RWPE1 (cell line): ENCODE measurements at regions of chr1 and their contacts with region 1.

Region 1: GRCh38 chr1:44002606-44003157 is 11.3 kb downstream of the CCDC24 start:
- DNase-seq: no peak
- H3K27ac ChIP-seq: no peak overlapping the region
- CTCF ChIP-seq: no peak

Region 2: GRCh38 chr1:44036409-44037139 is 33.9 kb after region 1 on chr1:
- CTCF ChIA-PET with region 1: interaction called, 43 read pairs
- POLR2A ChIA-PET with region 1: no interaction called
- DNase-seq: peak; percentile 68
- H3K27ac ChIP-seq: peak overlapping the region; percentile 96
- CTCF ChIP-seq: peak; percentile 91

Region 3: GRCh38 chr1:44044071-44044801 is 41.6 kb after region 1 on chr1:
- CTCF ChIA-PET with region 1: interaction called, 12 read pairs
- POLR2A ChIA-PET with region 1: no interaction called
- DNase-seq: no peak
- H3K27ac ChIP-seq: no peak overlapping the region
- CTCF ChIP-seq: no peak